ENCODE measurements at regions of chr7 and their contacts with region 1.

Region 1: GRCh38 chr7:128409596-128410160 is at the start of gene IMPDH1:
- DNase-seq: peak; percentile 91
- ATAC-seq: peak; percentile 81
- H3K4me3 ChIP-seq: peak within 1 kb of the TSS; percentile 73 to 93 (median 86)
- H3K4me3 Mint-ChIP-seq: peak within 1 kb of the TSS; percentile 95
- H3K27ac ChIP-seq: peak within 1 kb of the TSS; percentile 64 to 68
- H3K27ac Mint-ChIP-seq: peak within 1 kb of the TSS; percentile 86
- H3K4me1 ChIP-seq: peaks cover 19 to 53% of the 10 kb centered on the region in 2 donors
- H3K4me1 Mint-ChIP-seq: peaks cover 38% of the 10 kb centered on the region
- H3K27me3 ChIP-seq: peaks cover 0 to 1% (median 0%) of the 10 kb centered on the region in 4 experiments
- H3K27me3 Mint-ChIP-seq: peaks cover 4% of the 10 kb centered on the region
- CTCF ChIP-seq: no peak
- total RNA-seq, gene IMPDH1: 52.3 and 54.9 TPM in 2 replicates

Region 2: DNA sequence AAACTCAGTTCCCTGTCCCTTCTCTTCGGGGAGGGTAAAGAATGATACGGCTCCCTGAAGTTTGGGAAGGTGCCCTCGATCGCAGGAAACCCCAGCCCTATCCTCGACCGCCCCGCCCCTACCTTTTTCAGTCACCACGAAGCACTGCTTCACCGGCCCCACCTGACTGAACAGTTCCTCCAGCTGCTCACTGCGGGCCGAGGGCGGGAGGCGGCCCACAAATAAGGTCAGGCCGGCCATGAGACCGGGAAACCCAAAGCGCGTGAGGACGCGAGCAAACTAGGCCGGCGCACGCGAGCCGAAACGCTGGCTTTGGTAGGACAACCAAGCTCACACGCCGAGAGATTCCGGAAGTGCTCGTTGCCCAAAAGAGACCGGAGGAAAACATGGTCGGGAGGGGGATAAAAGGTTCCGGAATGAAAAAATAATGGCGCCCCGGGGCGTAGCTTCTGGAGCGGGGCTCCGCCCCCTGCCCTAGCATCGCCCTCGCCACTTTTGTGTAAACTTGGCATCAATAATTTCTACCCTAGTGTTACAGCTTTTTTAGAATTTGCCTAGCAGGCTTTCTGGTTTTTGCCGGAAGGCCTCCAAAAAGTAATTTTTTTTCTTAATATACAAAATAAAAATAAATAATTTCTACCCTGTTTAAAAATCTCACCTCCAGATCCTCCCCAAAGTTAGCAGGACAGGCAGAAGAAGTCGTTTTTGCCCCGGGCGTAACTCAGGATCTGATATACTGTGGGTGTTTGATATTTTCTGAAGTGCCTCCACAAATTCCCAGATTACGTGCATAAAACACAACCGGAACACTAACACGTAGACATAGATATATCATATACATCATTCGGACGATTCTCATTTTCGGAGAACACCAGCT is 65.9 kb before region 1 on chr7 and contains the start of gene RBM28:
- CTCF ChIA-PET with region 1: interaction called, 4 read pairs
- POLR2A ChIA-PET with region 1: no interaction called
- intact Hi-C with region 1: loop called (anchors 5 kb)
- DNase-seq: peak; percentile 95
- ATAC-seq: peak; percentile 95
- H3K4me3 ChIP-seq: peak within 1 kb of the TSS; percentile 75 to 91 (median 81)
- H3K4me3 Mint-ChIP-seq: peak within 1 kb of the TSS; percentile 98
- H3K27ac ChIP-seq: peak within 1 kb of the TSS; percentile 71 to 76
- H3K27ac Mint-ChIP-seq: peak within 1 kb of the TSS; percentile 96
- H3K4me1 ChIP-seq: peaks cover 15 to 19% of the 10 kb centered on the region in 2 donors
- H3K4me1 Mint-ChIP-seq: peaks cover 28% of the 10 kb centered on the region
- H3K27me3 ChIP-seq: peaks cover 0 to 11% (median 1%) of the 10 kb centered on the region in 4 experiments
- H3K27me3 Mint-ChIP-seq: peaks cover 14% of the 10 kb centered on the region
- CTCF ChIP-seq: no peak
- total RNA-seq, gene RBM28: 46.2 and 52.8 TPM in 2 replicates

Region 3: DNA sequence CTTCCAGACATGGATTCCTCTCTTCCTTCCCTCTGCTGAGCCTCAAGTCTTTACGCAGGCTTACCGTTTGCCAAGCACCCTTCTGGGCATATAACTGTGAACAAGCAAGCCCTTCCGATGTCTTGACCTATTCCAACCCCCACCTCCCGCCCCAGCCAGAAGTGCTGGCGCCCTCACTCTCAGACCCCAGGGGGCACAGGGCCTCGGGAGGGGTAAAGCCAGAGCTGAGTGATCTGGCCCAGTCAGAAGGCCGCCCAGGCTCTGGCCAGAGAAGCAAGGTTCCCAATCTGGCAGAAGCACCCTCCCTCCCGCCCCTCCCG is 49.4 kb before region 1 on chr7:
- CTCF ChIA-PET with region 1: no interaction called
- POLR2A ChIA-PET with region 1: no interaction called
- intact Hi-C with region 1: no loop called
- DNase-seq: no peak
- ATAC-seq: no peak
- H3K4me3 ChIP-seq: no peak overlapping the region
- H3K4me3 Mint-ChIP-seq: no peak overlapping the region
- H3K27ac ChIP-seq: no peak overlapping the region
- H3K27ac Mint-ChIP-seq: no peak overlapping the region
- H3K4me1 ChIP-seq: peaks cover 15 to 16% of the 10 kb centered on the region in 2 donors
- H3K4me1 Mint-ChIP-seq: peaks cover 17% of the 10 kb centered on the region
- H3K27me3 ChIP-seq: peaks cover 0 to 53% (median 31%) of the 10 kb centered on the region in 4 experiments
- H3K27me3 Mint-ChIP-seq: peaks cover 68% of the 10 kb centered on the region
- CTCF ChIP-seq: no peak

Region 4: GRCh38 chr7:128387216-128388144 is 22.2 kb before region 1 on chr7:
- CTCF ChIA-PET with region 1: interaction called, 12 read pairs
- POLR2A ChIA-PET with region 1: no interaction called
- intact Hi-C with region 1: no loop called
- DNase-seq: peak; percentile 71
- ATAC-seq: peak; percentile 89
- H3K4me3 ChIP-seq: no peak overlapping the region
- H3K4me3 Mint-ChIP-seq: no peak overlapping the region
- H3K27ac ChIP-seq: no peak overlapping the region
- H3K27ac Mint-ChIP-seq: no peak overlapping the region
- H3K4me1 ChIP-seq: peaks cover 0 to 7% of the 10 kb centered on the region in 2 donors
- H3K4me1 Mint-ChIP-seq: peaks cover 6% of the 10 kb centered on the region
- H3K27me3 ChIP-seq: peaks cover 0 to 11% (median 3%) of the 10 kb centered on the region in 4 experiments
- H3K27me3 Mint-ChIP-seq: no peaks in the 10 kb centered on the region
- CTCF ChIP-seq: peak; percentile 86

Region 5: DNA sequence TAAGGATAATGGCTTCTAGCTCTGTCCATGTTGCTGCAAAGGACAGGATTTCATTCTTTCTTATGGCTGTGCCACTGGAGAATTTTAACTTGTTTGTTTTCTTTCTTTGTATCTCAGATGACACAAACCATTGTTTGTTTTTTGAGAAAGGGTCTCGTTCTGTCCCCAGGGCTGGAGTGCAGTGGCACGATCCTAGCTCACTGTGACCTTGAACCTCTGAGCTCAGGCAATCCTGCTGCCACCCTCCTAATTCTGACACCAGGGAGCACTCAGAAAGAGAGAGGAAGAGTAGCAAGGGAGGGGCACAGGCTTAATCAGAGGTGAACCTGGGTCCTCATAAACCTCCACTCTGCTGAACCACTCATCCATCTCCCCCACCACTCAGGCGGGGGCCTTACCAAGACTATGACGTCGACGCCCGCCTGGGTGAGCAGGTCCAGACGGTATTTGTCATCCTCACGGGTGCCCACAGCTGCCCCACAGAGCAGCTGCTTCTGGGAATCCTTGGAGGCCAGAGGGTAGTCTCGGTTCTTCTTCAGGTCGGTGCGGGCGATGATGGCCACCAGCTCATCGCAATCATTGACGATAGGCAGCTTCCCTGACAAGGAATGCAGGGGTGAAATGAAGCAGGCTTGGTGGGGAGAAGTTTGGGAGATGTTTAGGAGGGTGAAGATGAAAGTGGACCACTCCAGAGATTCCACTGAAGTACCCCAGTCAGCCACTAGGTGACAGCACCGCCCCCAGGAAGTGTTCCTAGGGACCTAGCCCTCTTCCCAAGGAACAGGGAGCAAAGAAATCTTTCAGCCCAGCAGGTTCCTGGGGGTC is 11.4 kb before region 1 on chr7:
- CTCF ChIA-PET with region 1: interaction called, 11 read pairs
- POLR2A ChIA-PET with region 1: interaction called, 3 read pairs
- intact Hi-C with region 1: no loop called
- DNase-seq: peak; percentile 57
- ATAC-seq: peak; percentile 65
- H3K4me3 ChIP-seq: no peak overlapping the region
- H3K4me3 Mint-ChIP-seq: no peak overlapping the region
- H3K27ac ChIP-seq: no peak overlapping the region
- H3K27ac Mint-ChIP-seq: no peak overlapping the region
- H3K4me1 ChIP-seq: no peaks in the 10 kb centered on the region
- H3K4me1 Mint-ChIP-seq: no peaks in the 10 kb centered on the region
- H3K27me3 ChIP-seq: no peaks in the 10 kb centered on the region
- H3K27me3 Mint-ChIP-seq: no peaks in the 10 kb centered on the region
- CTCF ChIP-seq: peak; percentile 88

Region 6: DNA sequence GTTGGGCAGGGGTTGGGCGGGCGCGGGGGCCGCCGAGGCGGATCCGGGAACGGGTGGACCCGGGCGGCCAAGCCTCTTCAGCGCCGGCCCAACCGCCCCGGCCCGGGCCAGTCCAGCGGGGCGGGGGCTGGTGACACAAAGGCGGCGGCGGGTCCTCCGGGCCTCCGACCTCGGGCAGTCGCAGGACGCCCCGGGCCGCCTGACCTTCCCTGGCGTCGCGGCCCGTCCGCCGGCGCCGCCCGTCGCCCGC is 121.1 kb after region 1 on chr7:
- CTCF ChIA-PET with region 1: no interaction called
- POLR2A ChIA-PET with region 1: no interaction called
- intact Hi-C with region 1: loop called (anchors 5 kb)
- DNase-seq: no peak
- ATAC-seq: no peak
- H3K4me3 ChIP-seq: peak overlapping the region in 4 of 5 experiments; percentile 42 to 72 (median 68)
- H3K4me3 Mint-ChIP-seq: no peak overlapping the region
- H3K27ac ChIP-seq: peak overlapping the region; percentile 55 to 87
- H3K27ac Mint-ChIP-seq: no peak overlapping the region
- H3K4me1 ChIP-seq: peaks cover 13 to 18% of the 10 kb centered on the region in 2 donors
- H3K4me1 Mint-ChIP-seq: peaks cover 32% of the 10 kb centered on the region
- H3K27me3 ChIP-seq: no peaks in the 10 kb centered on the region
- H3K27me3 Mint-ChIP-seq: no peaks in the 10 kb centered on the region
- CTCF ChIP-seq: no peak

Region 7: DNA sequence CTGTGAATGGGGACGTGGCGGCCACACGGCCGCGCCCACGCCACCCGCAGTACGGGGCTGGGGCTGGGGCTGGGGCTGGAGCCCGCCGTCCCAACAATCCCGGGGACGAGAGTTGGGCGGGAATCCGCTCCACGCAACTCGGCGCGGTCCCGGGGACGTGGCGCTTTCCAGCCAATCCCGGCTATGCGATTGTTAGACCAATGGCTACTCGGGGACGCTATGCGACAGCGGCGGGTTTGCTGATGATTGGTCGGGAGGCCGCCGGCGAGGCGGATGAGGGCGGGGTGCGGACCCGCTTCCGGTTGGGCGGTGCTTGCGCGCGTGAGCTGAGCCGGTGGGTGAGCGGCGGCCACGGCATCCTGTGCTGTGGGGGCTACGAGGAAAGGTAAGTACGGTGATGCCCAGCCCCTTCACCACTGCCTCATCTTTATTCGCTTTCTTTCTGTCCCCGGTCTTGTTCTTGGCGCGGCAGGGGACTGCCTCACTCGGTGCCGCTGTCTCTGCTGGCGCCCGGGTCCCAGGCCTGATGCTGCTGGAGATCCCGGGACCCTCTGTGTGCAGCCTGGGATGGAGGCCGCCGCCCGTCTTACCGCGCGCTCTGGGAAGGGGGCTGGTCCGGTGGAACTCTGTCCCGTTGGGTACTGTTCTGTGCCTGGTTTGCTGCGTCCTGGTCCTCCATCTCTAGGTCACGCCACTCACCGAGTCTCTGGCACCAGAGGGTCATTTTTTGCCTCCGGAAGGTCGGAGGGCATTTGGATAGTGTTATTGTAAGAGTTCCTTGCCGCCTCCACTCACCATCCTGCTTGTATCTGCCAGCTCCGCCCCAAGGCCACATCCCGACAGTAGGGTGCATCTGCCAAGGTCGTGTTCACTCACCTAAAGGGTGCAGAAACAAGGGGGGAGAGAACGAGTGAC is 329.6 kb after region 1 on chr7 and contains the start of gene CALU:
- CTCF ChIA-PET with region 1: no interaction called
- POLR2A ChIA-PET with region 1: no interaction called
- intact Hi-C with region 1: loop called (anchors 2 kb)
- DNase-seq: peak; percentile 93
- ATAC-seq: peak; percentile 96
- H3K4me3 ChIP-seq: peak within 1 kb of the TSS; percentile 58 to 96 (median 88)
- H3K4me3 Mint-ChIP-seq: peak within 1 kb of the TSS; percentile 100
- H3K27ac ChIP-seq: peak within 1 kb of the TSS; percentile 67 to 83
- H3K27ac Mint-ChIP-seq: peak within 1 kb of the TSS; percentile 93
- H3K4me1 ChIP-seq: peaks cover 34 to 48% of the 10 kb centered on the region in 2 donors
- H3K4me1 Mint-ChIP-seq: peaks cover 41% of the 10 kb centered on the region
- H3K27me3 ChIP-seq: no peaks in the 10 kb centered on the region
- H3K27me3 Mint-ChIP-seq: no peaks in the 10 kb centered on the region
- CTCF ChIP-seq: no peak
- total RNA-seq, gene CALU: 11.2 and 12.4 TPM in 2 replicates

Measured in B cell (primary cell).